AG04450 (cell line): ENCODE measurements at regions of chr5 and their contacts with region 1.

Region 1: GRCh38 chr5:141338538-141339306 is at the start of gene PCDHGA2:
- DNase-seq: no peak
- H3K4me3 ChIP-seq: peak within 1 kb of the TSS; percentile 51
- H3K27ac ChIP-seq: no peak within 1 kb of the TSS
- H3K27me3 ChIP-seq: peaks cover 6% of the 10 kb centered on the region
- CTCF ChIP-seq: peak; percentile 57
- polyA plus RNA-seq, gene PCDHGA2: 6.1 and 6.3 TPM in 2 replicates

Region 2: GRCh38 chr5:141260458-141261237 is 78.1 kb before region 1 on chr5:
- CTCF ChIA-PET with region 1: no interaction called
- POLR2A ChIA-PET with region 1: no interaction called
- DNase-seq: no peak
- H3K4me3 ChIP-seq: no peak overlapping the region
- H3K27ac ChIP-seq: no peak overlapping the region
- H3K27me3 ChIP-seq: no peaks in the 10 kb centered on the region
- CTCF ChIP-seq: no peak

Region 3: GRCh38 chr5:141320225-141321169 is 18.2 kb before region 1 on chr5 and contains the start of gene TAF7:
- CTCF ChIA-PET with region 1: interaction called, 23 read pairs
- POLR2A ChIA-PET with region 1: interaction called, 3 read pairs
- DNase-seq: peak; percentile 84
- H3K4me3 ChIP-seq: peak within 1 kb of the TSS; percentile 84
- H3K27ac ChIP-seq: peak within 1 kb of the TSS; percentile 99
- H3K27me3 ChIP-seq: no peaks in the 10 kb centered on the region
- CTCF ChIP-seq: peak; percentile 88
- polyA plus RNA-seq, gene TAF7: 60.3 and 71.0 TPM in 2 replicates

Region 4: DNA sequence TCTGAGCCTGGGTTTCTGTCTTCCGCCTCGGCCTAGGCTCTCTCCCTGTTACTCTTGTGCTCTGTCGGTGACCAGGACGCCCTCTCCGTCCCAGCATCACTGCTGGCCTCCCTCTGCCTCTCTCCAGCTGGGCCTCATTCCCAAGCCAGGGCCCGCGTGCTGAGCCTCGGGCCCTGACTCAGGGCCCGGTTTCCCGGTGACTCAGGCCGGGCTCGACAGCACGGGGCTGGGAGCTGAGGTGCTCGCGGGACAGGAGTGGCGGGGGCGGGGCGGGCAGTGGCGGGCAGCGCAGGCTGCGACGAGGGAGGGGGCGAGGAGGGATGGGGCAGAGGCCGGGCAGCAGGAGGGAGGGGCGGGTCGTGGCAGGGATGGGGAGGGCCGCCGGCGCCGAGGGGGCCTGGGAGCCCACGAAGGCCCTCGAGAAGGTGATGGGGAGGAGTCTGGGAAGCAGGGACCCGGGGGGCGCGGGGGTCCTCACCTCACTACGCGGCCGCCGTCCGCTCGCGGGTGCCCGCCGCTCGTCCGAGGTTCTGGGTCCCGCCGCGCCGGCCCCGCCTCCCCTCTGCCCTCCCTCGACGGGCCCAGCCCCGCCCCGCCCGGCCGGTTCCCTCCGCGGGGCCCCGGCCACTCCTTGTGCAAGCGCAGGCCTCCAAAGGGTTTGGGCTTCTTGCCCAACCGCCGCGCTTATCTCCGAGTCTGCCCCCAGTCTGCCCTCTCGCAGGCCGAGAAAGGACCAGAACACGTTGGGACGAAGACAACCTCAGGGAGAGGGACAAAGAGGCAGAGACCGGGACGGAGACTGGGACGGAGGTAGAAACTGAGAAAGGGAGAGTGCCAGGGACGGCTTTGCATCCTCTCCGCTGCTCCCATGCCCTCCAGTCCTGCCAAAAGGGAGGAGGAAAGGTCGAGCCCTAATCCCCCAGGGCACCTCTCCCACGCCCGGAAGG is 343.2 kb after region 1 on chr5 and contains the start of gene ARAP3:
- CTCF ChIA-PET with region 1: no interaction called
- POLR2A ChIA-PET with region 1: no interaction called
- DNase-seq: peak; percentile 43
- H3K4me3 ChIP-seq: peak within 1 kb of the TSS; percentile 54
- H3K27ac ChIP-seq: peak within 1 kb of the TSS; percentile 77
- H3K27me3 ChIP-seq: no peaks in the 10 kb centered on the region
- CTCF ChIP-seq: no peak
- polyA plus RNA-seq, gene ARAP3: 3.5 and 4.9 TPM in 2 replicates